Activated CD4-positive, alpha-beta T cell treated with anti-CD3 and anti-CD28 coated beads for 36 hours (primary cell): ENCODE measurements at regions of chr16 and their contacts with region 1.

Region 1: GRCh38 chr16:68800257-68800875 is 43.0 kb upstream of the TANGO6 start:
- DNase-seq: peak; percentile 82
- ATAC-seq: peak; percentile 98
- H3K4me3 Mint-ChIP-seq: no peak overlapping the region
- H3K27ac Mint-ChIP-seq: no peak overlapping the region
- H3K4me1 Mint-ChIP-seq: peaks cover 11% of the 10 kb centered on the region
- H3K27me3 Mint-ChIP-seq: no peaks in the 10 kb centered on the region

Region 2: GRCh38 chr16:68704232-68704867 is 96.0 kb before region 1 on chr16:
- CTCF ChIA-PET with region 1: interaction called, 62 read pairs
- POLR2A ChIA-PET with region 1: no interaction called
- intact Hi-C with region 1: loop called (anchors 1 kb)
- DNase-seq: peak; percentile 83
- ATAC-seq: peak; percentile 91
- H3K4me3 Mint-ChIP-seq: no peak overlapping the region
- H3K27ac Mint-ChIP-seq: peak overlapping the region; percentile 39
- H3K4me1 Mint-ChIP-seq: peaks cover 5% of the 10 kb centered on the region
- H3K27me3 Mint-ChIP-seq: peaks cover 3% of the 10 kb centered on the region

Region 3: DNA sequence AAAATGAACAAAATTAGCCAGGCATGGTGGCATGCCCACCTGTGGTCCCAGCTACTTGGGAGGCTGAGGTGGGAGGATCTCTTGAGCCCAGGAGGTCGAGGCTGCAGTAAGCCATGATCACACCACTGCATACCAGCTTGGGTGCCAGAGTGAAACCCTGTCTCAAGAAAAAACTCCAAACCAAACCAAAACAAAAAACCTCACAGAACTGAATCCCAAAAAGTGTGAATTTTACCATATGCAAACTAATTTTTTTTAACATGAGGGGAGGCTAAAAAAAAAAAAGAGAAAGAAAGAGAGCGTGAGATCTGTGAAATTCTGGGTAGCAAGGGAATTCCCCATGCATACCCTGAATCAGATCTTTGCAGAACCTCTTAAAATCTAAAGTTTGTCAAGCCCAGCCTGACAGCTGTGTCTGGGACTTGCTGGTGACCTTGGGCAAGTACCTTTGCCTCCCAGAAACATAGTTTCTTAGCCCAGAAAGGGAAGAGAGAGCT is 80.3 kb before region 1 on chr16:
- CTCF ChIA-PET with region 1: interaction called, 4 read pairs
- POLR2A ChIA-PET with region 1: no interaction called
- intact Hi-C with region 1: loop called in 1 of 2 experiments (anchors 1 kb)
- DNase-seq: peak; percentile 64
- ATAC-seq: peak; percentile 96
- H3K4me3 Mint-ChIP-seq: no peak overlapping the region
- H3K27ac Mint-ChIP-seq: peak overlapping the region; percentile 82
- H3K4me1 Mint-ChIP-seq: peaks cover 19% of the 10 kb centered on the region
- H3K27me3 Mint-ChIP-seq: no peaks in the 10 kb centered on the region

Region 4: GRCh38 chr16:68762996-68763756 is 37.2 kb before region 1 on chr16:
- CTCF ChIA-PET with region 1: no interaction called
- POLR2A ChIA-PET with region 1: no interaction called
- intact Hi-C with region 1: no loop called
- DNase-seq: no peak
- ATAC-seq: no peak
- H3K4me3 Mint-ChIP-seq: no peak overlapping the region
- H3K27ac Mint-ChIP-seq: no peak overlapping the region
- H3K4me1 Mint-ChIP-seq: peaks cover 47% of the 10 kb centered on the region
- H3K27me3 Mint-ChIP-seq: no peaks in the 10 kb centered on the region

Region 5: GRCh38 chr16:68790130-68790761 is 10.1 kb before region 1 on chr16:
- CTCF ChIA-PET with region 1: interaction called, 11 read pairs
- POLR2A ChIA-PET with region 1: no interaction called
- intact Hi-C with region 1: no loop called
- DNase-seq: no peak
- ATAC-seq: no peak
- H3K4me3 Mint-ChIP-seq: no peak overlapping the region
- H3K27ac Mint-ChIP-seq: no peak overlapping the region
- H3K4me1 Mint-ChIP-seq: no peaks in the 10 kb centered on the region
- H3K27me3 Mint-ChIP-seq: peaks cover 7% of the 10 kb centered on the region

Region 6: GRCh38 chr16:68921654-68922053 is 121.3 kb after region 1 on chr16:
- CTCF ChIA-PET with region 1: no interaction called
- POLR2A ChIA-PET with region 1: no interaction called
- intact Hi-C with region 1: no loop called
- DNase-seq: no peak
- ATAC-seq: no peak
- H3K4me3 Mint-ChIP-seq: no peak overlapping the region
- H3K27ac Mint-ChIP-seq: no peak overlapping the region
- H3K4me1 Mint-ChIP-seq: no peaks in the 10 kb centered on the region
- H3K27me3 Mint-ChIP-seq: no peaks in the 10 kb centered on the region